ENCODE measurements at regions of chr5 and their contacts with region 1.

Region 1: DNA sequence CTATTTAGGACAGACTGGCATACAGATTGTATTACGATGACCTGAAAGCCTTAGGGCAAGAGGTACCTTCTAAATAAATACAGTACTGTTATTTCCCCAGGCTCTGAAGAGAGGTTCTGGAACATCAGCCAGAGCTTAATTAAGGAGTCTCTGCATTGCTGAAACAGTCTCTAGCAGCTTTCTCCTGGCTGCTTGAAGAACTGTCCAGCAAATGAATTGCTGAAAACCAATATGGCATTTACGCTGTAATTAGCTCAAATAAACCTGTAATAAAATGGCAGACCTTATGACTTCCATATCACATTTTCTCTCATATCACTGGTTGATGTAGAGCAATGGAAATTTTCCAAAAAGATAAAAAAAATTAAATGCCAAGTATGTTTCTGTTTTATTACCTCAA is 636.3 kb downstream of the GABRG2 start:
- DNase-seq: peak; percentile 32
- H3K4me3 Mint-ChIP-seq: no peak overlapping the region
- H3K27ac Mint-ChIP-seq: no peak overlapping the region
- H3K4me1 Mint-ChIP-seq: peaks cover 5% of the 10 kb centered on the region
- H3K27me3 Mint-ChIP-seq: peaks cover 36% of the 10 kb centered on the region
- CTCF ChIP-seq: no peak

Region 2: GRCh38 chr5:161580621-161581020 is 1123.3 kb before region 1 on chr5:
- CTCF ChIA-PET with region 1: interaction called, 10 read pairs
- POLR2A ChIA-PET with region 1: no interaction called
- intact Hi-C with region 1: no loop called
- DNase-seq: no peak
- H3K4me3 Mint-ChIP-seq: no peak overlapping the region
- H3K27ac Mint-ChIP-seq: no peak overlapping the region
- H3K4me1 Mint-ChIP-seq: no peaks in the 10 kb centered on the region
- H3K27me3 Mint-ChIP-seq: no peaks in the 10 kb centered on the region
- CTCF ChIP-seq: no peak

Region 3: DNA sequence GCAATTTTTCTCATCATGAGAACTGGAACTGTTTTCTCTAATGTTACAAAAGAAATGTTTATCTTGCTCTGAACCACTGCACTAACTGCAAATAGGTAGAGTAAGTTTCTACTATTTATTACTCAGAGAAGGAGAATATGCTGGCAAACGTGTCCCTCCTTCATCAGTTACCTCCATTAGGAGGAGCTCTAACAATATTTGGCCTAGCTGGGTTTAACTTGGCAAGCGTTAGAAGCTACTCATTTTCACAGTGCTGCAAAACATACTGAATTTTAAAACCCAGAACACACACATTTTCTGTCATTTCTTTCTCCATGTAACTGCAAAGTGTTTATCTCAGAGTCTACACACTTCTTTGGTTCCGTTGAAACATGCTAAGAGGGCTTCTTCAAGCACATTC is 737.4 kb before region 1 on chr5:
- CTCF ChIA-PET with region 1: interaction called, 11 read pairs
- POLR2A ChIA-PET with region 1: no interaction called
- intact Hi-C with region 1: loop called (anchors 1 kb)
- DNase-seq: peak; percentile 60
- H3K4me3 Mint-ChIP-seq: no peak overlapping the region
- H3K27ac Mint-ChIP-seq: no peak overlapping the region
- H3K4me1 Mint-ChIP-seq: no peaks in the 10 kb centered on the region
- H3K27me3 Mint-ChIP-seq: peaks cover 76% of the 10 kb centered on the region
- CTCF ChIP-seq: peak; percentile 69

Region 4: DNA sequence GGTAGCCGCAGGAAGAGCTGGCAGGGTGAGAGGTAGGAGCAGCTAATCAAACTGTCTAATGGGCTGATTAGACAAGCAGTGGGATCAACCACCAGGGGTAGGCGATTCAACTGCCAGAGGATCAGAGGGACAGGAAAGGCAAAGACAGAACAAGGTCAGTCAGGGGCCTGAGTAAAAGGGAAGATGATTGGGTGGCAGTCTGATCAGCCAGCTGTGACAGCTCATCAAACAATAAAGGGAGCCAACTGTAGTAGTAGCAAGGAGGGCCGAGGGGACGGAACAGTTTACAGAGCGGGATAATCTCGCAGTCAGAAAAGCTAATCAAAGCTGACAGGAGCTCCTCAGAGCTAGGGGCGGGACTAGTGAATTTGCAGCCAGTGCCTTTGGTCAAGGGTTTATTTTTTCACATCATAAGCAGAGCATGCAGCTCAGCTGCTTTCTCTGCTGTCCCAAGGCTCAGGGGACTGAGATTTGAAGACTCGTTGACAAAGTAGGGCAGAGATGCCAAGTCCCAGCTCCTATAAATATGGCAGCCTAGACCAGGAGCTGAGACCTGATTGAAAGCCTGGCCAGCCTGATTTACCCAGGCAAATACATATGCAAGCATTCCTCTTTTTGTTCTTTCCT is 218.1 kb before region 1 on chr5:
- CTCF ChIA-PET with region 1: interaction called, 3 read pairs
- POLR2A ChIA-PET with region 1: no interaction called
- intact Hi-C with region 1: loop called (anchors 10 kb)
- DNase-seq: no peak
- H3K4me3 Mint-ChIP-seq: no peak overlapping the region
- H3K27ac Mint-ChIP-seq: no peak overlapping the region
- H3K4me1 Mint-ChIP-seq: peaks cover 21% of the 10 kb centered on the region
- H3K27me3 Mint-ChIP-seq: no peaks in the 10 kb centered on the region
- CTCF ChIP-seq: no peak

Region 5: DNA sequence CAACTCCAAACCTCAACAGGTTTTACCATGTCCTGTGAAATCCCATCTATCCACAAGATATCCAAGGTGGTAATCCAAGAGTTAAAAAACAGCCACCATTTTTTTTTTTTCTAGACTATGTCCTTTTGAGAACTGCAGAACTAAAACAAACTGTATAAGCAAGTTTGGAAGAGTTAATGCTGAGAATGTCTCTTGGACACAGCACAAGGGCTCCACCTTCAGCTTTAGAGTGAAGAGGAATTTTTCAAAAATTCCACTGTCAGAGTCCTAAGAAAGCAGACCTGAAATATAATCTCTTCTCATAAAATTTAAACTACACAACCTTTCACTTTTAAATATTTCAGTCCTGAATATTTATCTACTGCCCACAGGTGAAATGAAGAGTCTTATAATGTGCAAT is 565.7 kb after region 1 on chr5:
- CTCF ChIA-PET with region 1: interaction called, 6 read pairs
- POLR2A ChIA-PET with region 1: no interaction called
- intact Hi-C with region 1: loop called (anchors 5 kb)
- DNase-seq: peak; percentile 45
- H3K4me3 Mint-ChIP-seq: no peak overlapping the region
- H3K27ac Mint-ChIP-seq: no peak overlapping the region
- H3K4me1 Mint-ChIP-seq: no peaks in the 10 kb centered on the region
- H3K27me3 Mint-ChIP-seq: peaks cover 81% of the 10 kb centered on the region
- CTCF ChIP-seq: peak; percentile 50

Measured in MCF 10A (cell line).